ENCODE measurements at regions of chrX and their contacts with region 1.

Region 1: DNA sequence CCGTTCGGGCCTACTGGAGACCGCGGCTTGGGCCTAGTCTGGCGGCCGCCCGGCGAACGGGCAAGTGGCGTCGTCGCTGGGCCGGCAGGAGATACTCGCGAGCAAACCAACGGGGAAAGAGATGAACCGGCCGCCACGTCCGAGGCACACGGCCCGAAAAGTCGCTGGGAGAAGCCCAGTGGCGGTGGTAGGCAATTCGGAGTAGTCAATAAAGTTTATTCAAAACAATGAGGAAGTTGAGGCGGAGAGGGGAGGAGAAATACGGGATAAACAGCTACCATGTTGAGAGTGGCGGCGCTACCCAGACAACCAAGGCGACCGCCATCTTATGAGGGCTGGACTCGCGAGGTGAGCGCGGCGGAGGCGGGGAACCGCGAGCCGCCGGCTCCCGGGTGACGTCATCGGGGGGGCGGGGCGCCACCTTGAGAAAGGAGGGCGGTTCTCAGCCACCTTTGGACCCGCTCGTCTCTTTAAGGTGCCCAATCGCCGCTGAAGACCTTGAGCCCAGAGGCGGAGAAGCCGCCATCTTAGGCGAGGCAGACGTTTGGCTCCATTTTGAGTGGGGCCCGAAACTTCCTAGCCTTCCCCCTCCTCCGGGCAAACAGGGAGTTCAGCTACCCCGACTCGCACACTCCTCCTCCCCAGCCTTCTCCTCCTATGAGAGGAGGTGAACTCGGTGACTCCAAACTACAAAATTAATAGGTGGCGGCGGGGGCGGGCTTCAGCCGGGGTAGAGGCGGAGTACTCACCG is at the start of gene PHF8:
- DNase-seq: peak; percentile 87
- ATAC-seq: peak; percentile 82
- H3K4me3 Mint-ChIP-seq: peak within 1 kb of the TSS; percentile 92
- H3K27ac Mint-ChIP-seq: peak within 1 kb of the TSS; percentile 96
- H3K4me1 Mint-ChIP-seq: peaks cover 15% of the 10 kb centered on the region
- H3K27me3 Mint-ChIP-seq: no peaks in the 10 kb centered on the region
- CTCF ChIP-seq: no peak
- total RNA-seq, gene PHF8: 56.6 and 58.7 TPM in 2 replicates

Region 2: GRCh38 chrX:53081925-53082772 is 962.2 kb before region 1 on chrX and contains the start of gene TSPYL2:
- CTCF ChIA-PET with region 1: no interaction called
- POLR2A ChIA-PET with region 1: no interaction called
- intact Hi-C with region 1: loop called (anchors 5 kb)
- DNase-seq: peak; percentile 85
- ATAC-seq: peak; percentile 92
- H3K4me3 Mint-ChIP-seq: peak within 1 kb of the TSS; percentile 91
- H3K27ac Mint-ChIP-seq: peak within 1 kb of the TSS; percentile 98
- H3K4me1 Mint-ChIP-seq: peaks cover 27% of the 10 kb centered on the region
- H3K27me3 Mint-ChIP-seq: no peaks in the 10 kb centered on the region
- CTCF ChIP-seq: no peak
- total RNA-seq, gene TSPYL2: 48.2 and 49.7 TPM in 2 replicates

Region 3: GRCh38 chrX:53683556-53684414 is 360.5 kb before region 1 on chrX:
- CTCF ChIA-PET with region 1: no interaction called
- POLR2A ChIA-PET with region 1: interaction called, 25 read pairs
- intact Hi-C with region 1: loop called (anchors 1 kb)
- DNase-seq: peak; percentile 69
- ATAC-seq: peak; percentile 68
- H3K4me3 Mint-ChIP-seq: peak overlapping the region; percentile 91
- H3K27ac Mint-ChIP-seq: peak overlapping the region; percentile 97
- H3K4me1 Mint-ChIP-seq: peaks cover 40% of the 10 kb centered on the region
- H3K27me3 Mint-ChIP-seq: no peaks in the 10 kb centered on the region
- CTCF ChIP-seq: no peak

Region 4: GRCh38 chrX:54439967-54440871 is 395.9 kb after region 1 on chrX and contains the start of gene TSR2:
- CTCF ChIA-PET with region 1: no interaction called
- POLR2A ChIA-PET with region 1: interaction called, 11 read pairs
- intact Hi-C with region 1: loop called (anchors 1 kb)
- DNase-seq: peak; percentile 59
- ATAC-seq: peak; percentile 98
- H3K4me3 Mint-ChIP-seq: peak within 1 kb of the TSS; percentile 91
- H3K27ac Mint-ChIP-seq: peak within 1 kb of the TSS; percentile 76
- H3K4me1 Mint-ChIP-seq: peaks cover 29% of the 10 kb centered on the region
- H3K27me3 Mint-ChIP-seq: no peaks in the 10 kb centered on the region
- CTCF ChIP-seq: no peak
- total RNA-seq, gene TSR2: 35.9 and 42.4 TPM in 2 replicates

Region 5: DNA sequence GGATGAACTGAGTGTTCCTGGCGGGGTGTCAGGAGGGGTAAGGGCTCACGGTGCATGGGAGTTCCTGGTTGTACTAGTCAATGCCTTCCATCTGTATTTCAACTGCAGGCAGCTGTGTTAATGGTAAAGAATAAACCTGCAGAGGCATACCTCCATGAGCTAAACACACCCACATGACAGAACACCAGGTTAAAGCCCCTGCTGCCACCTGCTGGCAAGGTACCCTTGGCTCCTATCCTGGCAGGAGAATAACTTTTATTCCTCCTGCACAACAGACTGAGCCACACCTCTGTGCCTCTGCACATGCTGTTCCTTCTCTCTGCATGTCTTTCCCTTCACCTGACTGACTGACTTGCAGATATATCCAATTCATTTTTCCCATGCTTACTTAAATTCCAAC is 742.7 kb after region 1 on chrX:
- CTCF ChIA-PET with region 1: no interaction called
- POLR2A ChIA-PET with region 1: no interaction called
- intact Hi-C with region 1: loop called (anchors 2 kb)
- DNase-seq: no peak
- ATAC-seq: peak; percentile 58
- H3K4me3 Mint-ChIP-seq: no peak overlapping the region
- H3K27ac Mint-ChIP-seq: no peak overlapping the region
- H3K4me1 Mint-ChIP-seq: no peaks in the 10 kb centered on the region
- H3K27me3 Mint-ChIP-seq: no peaks in the 10 kb centered on the region
- CTCF ChIP-seq: no peak

Region 6: GRCh38 chrX:55160685-55161552 is 1116.6 kb after region 1 on chrX:
- CTCF ChIA-PET with region 1: no interaction called
- POLR2A ChIA-PET with region 1: interaction called, 4 read pairs
- intact Hi-C with region 1: loop called (anchors 1 kb)
- DNase-seq: peak; percentile 81
- ATAC-seq: peak; percentile 93
- H3K4me3 Mint-ChIP-seq: peak overlapping the region; percentile 89
- H3K27ac Mint-ChIP-seq: peak overlapping the region; percentile 94
- H3K4me1 Mint-ChIP-seq: peaks cover 11% of the 10 kb centered on the region
- H3K27me3 Mint-ChIP-seq: no peaks in the 10 kb centered on the region
- CTCF ChIP-seq: no peak

Measured in activated B cell treated with CpG ODN at 0.5 μM for 24 hours (primary cell).